Posterior vena cava (tissue), 2 donors: ENCODE measurements at regions of chr11 and their contacts with region 1.

Region 1: DNA sequence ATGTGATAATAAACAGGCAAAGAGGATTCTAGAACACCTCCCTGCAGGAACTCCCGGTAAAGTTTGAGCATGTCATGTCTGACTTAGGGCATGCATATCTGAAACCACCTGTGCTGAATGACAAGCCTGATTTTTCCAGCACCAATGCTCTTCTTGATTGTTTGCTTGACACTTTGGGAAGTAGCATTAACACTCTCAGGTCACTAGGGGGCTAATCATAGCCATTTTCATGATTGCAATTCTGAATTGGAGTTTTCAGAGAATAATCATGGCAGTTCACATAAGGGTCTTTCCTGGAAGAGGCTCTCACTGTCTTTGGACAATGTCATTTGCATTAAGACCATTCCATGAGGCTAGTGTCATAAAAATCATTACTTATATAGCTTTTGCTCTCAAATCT is 234.4 kb upstream of the MTNR1B start:
- DNase-seq: no peak

Region 2: GRCh38 chr11:94544646-94545263 is 1809.7 kb after region 1 on chr11:
- intact Hi-C with region 1: loop called in 1 of 2 experiments (anchors 5 kb)
- DNase-seq: peak; percentile 85